ENCODE measurements at regions of chr15 and their contacts with region 1.

Region 1: GRCh38 chr15:85380217-85380811 is at the start of gene AKAP13:
- DNase-seq: peak; percentile 98
- H3K4me3 Mint-ChIP-seq: peak within 1 kb of the TSS; percentile 88
- H3K27ac Mint-ChIP-seq: peak within 1 kb of the TSS; percentile 93
- H3K4me1 Mint-ChIP-seq: peaks cover 51% of the 10 kb centered on the region
- H3K27me3 Mint-ChIP-seq: peaks cover 3% of the 10 kb centered on the region
- total RNA-seq, gene AKAP13: 68.5 and 71.3 TPM in 2 replicates

Region 2: DNA sequence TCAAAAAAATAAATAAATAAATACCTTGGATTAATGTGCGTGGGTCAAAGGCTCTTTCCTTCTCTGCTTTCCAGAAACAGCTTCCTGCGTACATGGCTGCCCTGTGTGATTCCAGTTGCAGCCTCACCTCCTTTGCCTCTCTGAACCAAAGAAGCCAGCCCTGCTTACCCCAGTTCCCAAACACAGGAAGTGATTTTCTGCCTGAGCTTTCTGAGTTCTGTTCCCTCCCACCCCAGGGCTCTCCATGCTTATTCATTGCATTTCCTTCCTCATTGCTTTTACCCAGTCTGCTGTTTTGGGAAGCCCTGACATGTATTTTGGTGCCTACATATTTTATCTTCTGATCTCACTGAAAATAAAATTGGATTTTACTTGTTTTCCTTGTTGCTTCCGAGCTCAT is 764.1 kb before region 1 on chr15:
- intact Hi-C with region 1: no loop called
- DNase-seq: no peak
- H3K4me3 Mint-ChIP-seq: no peak overlapping the region
- H3K27ac Mint-ChIP-seq: no peak overlapping the region
- H3K4me1 Mint-ChIP-seq: peaks cover 2% of the 10 kb centered on the region
- H3K27me3 Mint-ChIP-seq: no peaks in the 10 kb centered on the region

Region 3: GRCh38 chr15:85318048-85318731 is 62.1 kb before region 1 on chr15:
- intact Hi-C with region 1: loop called (anchors 1 kb)
- DNase-seq: peak; percentile 83
- H3K4me3 Mint-ChIP-seq: peak overlapping the region; percentile 64
- H3K27ac Mint-ChIP-seq: peak overlapping the region; percentile 86
- H3K4me1 Mint-ChIP-seq: peaks cover 55% of the 10 kb centered on the region
- H3K27me3 Mint-ChIP-seq: no peaks in the 10 kb centered on the region

Region 4: DNA sequence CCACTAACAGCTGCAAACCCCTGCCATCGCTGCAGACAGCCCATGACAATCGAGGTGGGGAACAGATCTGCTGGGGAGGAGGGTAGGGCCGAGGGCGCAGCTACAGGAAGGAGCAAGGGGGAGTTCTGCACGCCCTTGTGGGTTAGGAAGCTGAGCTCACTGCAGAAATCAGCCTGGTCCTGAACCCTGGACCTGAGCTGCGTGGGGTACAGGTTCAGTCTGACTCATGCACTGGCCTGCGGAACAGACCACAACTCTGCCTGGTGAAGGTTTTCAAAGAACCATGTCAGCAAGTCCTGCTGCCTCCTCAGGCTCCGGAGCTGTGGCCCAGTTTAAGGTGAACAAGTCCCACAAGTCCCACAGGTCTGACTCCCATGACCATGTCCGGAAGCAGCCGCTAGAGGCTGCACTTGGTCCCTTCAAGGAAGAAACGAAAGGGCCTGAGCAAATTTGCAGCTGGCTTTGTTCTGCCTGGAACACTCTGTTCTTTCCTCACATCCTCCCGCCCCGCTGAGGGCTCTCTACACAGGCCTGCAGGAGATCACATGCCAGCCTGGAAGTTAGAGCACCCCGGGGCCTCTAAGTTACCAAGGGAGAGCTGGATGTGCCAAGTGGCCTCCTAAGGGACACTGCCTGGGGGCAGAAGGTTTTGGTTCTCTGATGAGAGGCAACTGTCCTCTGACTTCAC is 49.3 kb before region 1 on chr15:
- intact Hi-C with region 1: loop called (anchors 1 kb)
- DNase-seq: peak; percentile 92
- H3K4me3 Mint-ChIP-seq: peak overlapping the region; percentile 90
- H3K27ac Mint-ChIP-seq: peak overlapping the region; percentile 94
- H3K4me1 Mint-ChIP-seq: peaks cover 44% of the 10 kb centered on the region
- H3K27me3 Mint-ChIP-seq: no peaks in the 10 kb centered on the region

Region 5: DNA sequence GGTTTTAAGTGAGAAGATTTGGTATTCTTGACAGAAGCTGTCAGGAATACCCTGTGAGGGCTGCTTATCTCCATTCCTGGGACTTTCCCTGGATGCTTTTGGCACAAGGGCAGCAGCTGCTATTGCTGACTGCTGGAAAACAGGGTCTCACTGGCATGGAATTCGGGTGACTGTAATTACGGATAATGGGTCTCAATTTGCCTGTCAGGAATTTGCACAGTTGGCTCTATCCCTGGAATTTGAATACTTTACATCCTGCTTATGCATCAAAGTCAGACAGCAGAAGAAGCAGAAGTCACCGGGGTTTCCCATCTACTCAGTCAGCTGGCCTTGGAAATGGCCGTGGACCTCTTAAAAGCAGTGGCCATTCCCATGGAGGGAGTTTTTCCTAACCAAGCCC is 25.9 kb before region 1 on chr15:
- intact Hi-C with region 1: loop called (anchors 1 kb)
- DNase-seq: no peak
- H3K4me3 Mint-ChIP-seq: no peak overlapping the region
- H3K27ac Mint-ChIP-seq: no peak overlapping the region
- H3K4me1 Mint-ChIP-seq: peaks cover 9% of the 10 kb centered on the region
- H3K27me3 Mint-ChIP-seq: peaks cover 3% of the 10 kb centered on the region

Region 6: DNA sequence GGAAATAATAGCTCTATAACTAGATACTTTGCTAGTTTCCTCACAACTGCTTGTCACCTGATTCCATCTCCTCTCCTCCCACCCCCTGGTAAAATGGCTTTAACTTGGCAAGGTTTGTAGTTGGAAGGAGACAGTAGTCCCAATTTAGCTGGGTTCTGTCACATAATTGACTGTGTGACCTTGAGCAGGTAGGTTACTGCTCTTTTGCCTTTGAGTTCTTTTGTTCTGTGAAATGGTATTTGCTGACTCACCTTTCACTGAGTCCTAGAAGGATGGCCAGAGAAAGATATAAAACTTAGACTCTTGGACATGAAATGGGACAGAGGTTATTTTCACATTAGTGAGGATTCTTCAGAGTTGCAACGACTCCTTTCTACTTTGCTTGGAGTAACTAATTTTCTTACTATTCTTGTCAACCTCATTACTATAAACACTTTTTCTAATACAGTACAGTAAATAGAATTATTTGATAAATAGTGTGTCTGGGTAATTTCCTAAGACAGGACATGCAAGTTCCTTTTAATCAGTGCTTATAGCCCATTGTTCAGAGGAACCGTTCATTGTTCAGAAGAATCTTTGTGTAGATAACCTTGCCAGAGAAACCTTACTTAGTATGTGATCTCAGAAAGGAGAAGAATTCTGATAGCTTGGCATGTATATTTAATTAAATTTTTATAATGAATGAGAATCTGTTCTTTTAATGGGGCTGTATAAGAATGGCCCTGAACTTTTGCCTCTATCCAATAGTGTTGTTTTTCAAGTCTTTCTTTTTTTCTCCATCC is 14.4 kb after region 1 on chr15:
- intact Hi-C with region 1: no loop called
- DNase-seq: no peak
- H3K4me3 Mint-ChIP-seq: no peak overlapping the region
- H3K27ac Mint-ChIP-seq: no peak overlapping the region
- H3K4me1 Mint-ChIP-seq: peaks cover 19% of the 10 kb centered on the region
- H3K27me3 Mint-ChIP-seq: no peaks in the 10 kb centered on the region

Region 7: DNA sequence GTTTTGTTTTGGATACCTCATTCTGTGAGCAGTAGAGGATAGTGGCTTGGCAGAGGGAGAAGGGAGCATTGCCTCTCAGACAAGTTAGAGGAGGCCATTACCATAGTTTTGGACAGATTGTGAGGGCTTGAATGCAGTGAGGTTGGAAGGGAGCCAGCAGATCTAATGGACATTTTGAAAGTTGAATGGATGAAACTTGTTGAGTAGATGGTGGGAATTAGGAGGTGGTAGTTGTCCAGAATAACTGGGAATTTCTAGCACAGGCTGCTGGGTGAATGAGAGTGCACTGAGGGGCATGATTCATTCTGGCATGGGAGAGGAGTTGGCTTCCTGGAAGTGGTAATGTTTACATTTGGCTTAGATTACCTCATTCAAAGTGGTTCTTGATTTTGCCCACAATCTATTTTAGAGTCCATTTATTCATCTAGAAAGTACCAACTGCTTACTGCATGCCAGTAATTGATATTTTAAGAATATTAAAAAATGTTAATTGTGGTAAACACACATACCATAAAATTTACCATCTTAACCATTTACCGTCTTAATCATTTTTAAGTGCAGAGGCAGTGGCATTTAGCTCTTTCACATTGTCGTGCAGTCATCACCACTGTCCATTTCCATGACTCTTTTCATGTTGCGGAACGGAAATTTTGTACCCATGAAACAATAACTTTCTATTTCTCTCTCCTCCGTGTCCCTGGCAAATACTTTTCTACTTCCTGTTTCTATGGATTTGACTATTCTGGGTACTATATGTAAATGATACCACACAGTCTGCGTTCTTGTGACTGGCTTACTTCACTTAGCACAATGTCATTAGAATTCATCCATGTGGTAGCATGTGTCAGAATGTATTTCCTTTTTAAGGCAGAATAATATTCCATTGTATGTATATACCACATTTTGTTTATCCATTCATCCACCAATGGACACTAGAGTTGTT is 27.8 kb after region 1 on chr15:
- intact Hi-C with region 1: loop called (anchors 1 kb)
- DNase-seq: peak; percentile 76
- H3K4me3 Mint-ChIP-seq: peak overlapping the region; percentile 68
- H3K27ac Mint-ChIP-seq: peak overlapping the region; percentile 95
- H3K4me1 Mint-ChIP-seq: peaks cover 65% of the 10 kb centered on the region
- H3K27me3 Mint-ChIP-seq: no peaks in the 10 kb centered on the region

Region 8: GRCh38 chr15:85443593-85444087 is 63.3 kb after region 1 on chr15:
- intact Hi-C with region 1: loop called (anchors 5 kb)
- DNase-seq: peak; percentile 73
- H3K4me3 Mint-ChIP-seq: no peak overlapping the region
- H3K27ac Mint-ChIP-seq: peak overlapping the region; percentile 77
- H3K4me1 Mint-ChIP-seq: peaks cover 28% of the 10 kb centered on the region
- H3K27me3 Mint-ChIP-seq: no peaks in the 10 kb centered on the region

Region 9: GRCh38 chr15:85658816-85659215 is 278.5 kb after region 1 on chr15:
- intact Hi-C with region 1: no loop called
- DNase-seq: no peak
- H3K4me3 Mint-ChIP-seq: no peak overlapping the region
- H3K27ac Mint-ChIP-seq: no peak overlapping the region
- H3K4me1 Mint-ChIP-seq: peaks cover 5% of the 10 kb centered on the region
- H3K27me3 Mint-ChIP-seq: no peaks in the 10 kb centered on the region

Region 10: DNA sequence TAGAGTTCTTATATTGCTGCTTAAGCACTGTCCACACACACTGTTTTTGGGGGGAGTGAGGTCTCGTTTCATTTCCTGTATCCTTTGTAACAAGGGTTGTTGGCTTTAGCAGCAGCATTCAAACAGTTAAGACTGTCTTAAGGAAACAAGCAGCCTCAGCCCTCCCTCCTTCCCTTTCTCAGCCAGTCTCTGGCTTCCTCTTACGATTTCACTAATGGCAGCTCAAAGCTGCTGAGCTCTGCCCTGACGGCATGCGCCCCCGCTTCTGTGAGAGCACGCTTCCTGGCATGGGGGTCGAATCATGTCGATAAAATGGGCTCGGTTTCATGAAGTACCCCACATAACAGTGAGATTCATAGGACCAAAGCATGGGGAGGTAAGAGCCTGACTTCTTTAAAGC is 309.4 kb after region 1 on chr15:
- intact Hi-C with region 1: loop called (anchors 10 kb)
- DNase-seq: peak; percentile 91
- H3K4me3 Mint-ChIP-seq: peak overlapping the region; percentile 93
- H3K27ac Mint-ChIP-seq: peak overlapping the region; percentile 99
- H3K4me1 Mint-ChIP-seq: peaks cover 65% of the 10 kb centered on the region
- H3K27me3 Mint-ChIP-seq: no peaks in the 10 kb centered on the region